PC-9 (cell line): ENCODE measurements at regions of chr12 and their contacts with region 1.

Region 1: GRCh38 chr12:26028953-26029735 is 70.7 kb downstream of the RASSF8 start:
- DNase-seq: peak in 1 of 2 experiments; percentile 42
- H3K4me3 ChIP-seq: no peak overlapping the region
- H3K27ac ChIP-seq: no peak overlapping the region
- H3K4me1 ChIP-seq: peaks cover 16% of the 10 kb centered on the region
- H3K27me3 ChIP-seq: no peaks in the 10 kb centered on the region
- CTCF ChIP-seq: peak; percentile 87

Region 2: GRCh38 chr12:25583545-25583944 is 445.6 kb before region 1 on chr12:
- CTCF ChIA-PET with region 1: no interaction called
- POLR2A ChIA-PET with region 1: no interaction called
- intact Hi-C with region 1: loop called (anchors 5 kb)
- DNase-seq: peak in 1 of 2 experiments; percentile 14
- H3K4me3 ChIP-seq: no peak overlapping the region
- H3K27ac ChIP-seq: no peak overlapping the region
- H3K4me1 ChIP-seq: no peaks in the 10 kb centered on the region
- H3K27me3 ChIP-seq: no peaks in the 10 kb centered on the region
- CTCF ChIP-seq: peak; percentile 32; the same call in 1 of the 2 replicates

Region 3: GRCh38 chr12:25935355-25936144 is 93.6 kb before region 1 on chr12:
- CTCF ChIA-PET with region 1: no interaction called
- POLR2A ChIA-PET with region 1: interaction called, 20 read pairs
- intact Hi-C with region 1: no loop called
- DNase-seq: peak in 1 of 2 experiments; percentile 40
- H3K4me3 ChIP-seq: no peak overlapping the region
- H3K27ac ChIP-seq: no peak overlapping the region
- H3K4me1 ChIP-seq: no peaks in the 10 kb centered on the region
- H3K27me3 ChIP-seq: no peaks in the 10 kb centered on the region
- CTCF ChIP-seq: no peak

Region 4: DNA sequence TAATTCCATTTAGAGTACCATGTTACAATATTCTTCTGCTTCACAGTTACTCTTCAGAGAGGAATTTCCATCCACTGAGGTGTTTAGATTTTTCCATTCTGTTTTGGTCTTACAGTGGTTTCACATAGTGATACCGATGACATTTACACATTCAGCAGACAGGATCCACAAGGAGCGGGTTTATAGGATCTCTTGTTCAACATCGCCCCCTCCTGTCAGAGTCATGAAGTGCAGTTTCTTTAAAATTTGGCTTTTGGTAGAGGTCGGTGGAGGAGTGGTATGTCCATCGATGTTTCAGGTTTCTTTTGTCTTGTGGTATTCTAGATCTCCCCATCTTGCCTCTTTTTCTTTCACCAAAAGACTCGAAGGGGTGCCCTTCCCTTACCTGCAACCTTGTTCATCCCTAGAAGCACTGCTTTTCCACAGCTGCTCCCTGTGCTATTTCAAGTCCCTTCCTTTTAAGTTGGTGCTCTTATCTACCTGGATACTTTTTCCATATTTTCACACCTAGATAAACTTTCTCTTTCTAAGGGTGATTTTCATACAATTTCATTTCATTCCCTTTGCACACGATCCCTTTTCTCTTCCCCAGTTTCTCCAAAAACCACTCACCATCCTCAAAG is 622.5 kb after region 1 on chr12:
- CTCF ChIA-PET with region 1: no interaction called
- POLR2A ChIA-PET with region 1: no interaction called
- intact Hi-C with region 1: loop called (anchors 10 kb)
- DNase-seq: peak; percentile 67 to 77
- H3K4me3 ChIP-seq: no peak overlapping the region
- H3K27ac ChIP-seq: no peak overlapping the region
- H3K4me1 ChIP-seq: peaks cover 12% of the 10 kb centered on the region; the same call in 1 of the 2 replicates
- H3K27me3 ChIP-seq: no peaks in the 10 kb centered on the region
- CTCF ChIP-seq: peak; percentile 97

Region 5: DNA sequence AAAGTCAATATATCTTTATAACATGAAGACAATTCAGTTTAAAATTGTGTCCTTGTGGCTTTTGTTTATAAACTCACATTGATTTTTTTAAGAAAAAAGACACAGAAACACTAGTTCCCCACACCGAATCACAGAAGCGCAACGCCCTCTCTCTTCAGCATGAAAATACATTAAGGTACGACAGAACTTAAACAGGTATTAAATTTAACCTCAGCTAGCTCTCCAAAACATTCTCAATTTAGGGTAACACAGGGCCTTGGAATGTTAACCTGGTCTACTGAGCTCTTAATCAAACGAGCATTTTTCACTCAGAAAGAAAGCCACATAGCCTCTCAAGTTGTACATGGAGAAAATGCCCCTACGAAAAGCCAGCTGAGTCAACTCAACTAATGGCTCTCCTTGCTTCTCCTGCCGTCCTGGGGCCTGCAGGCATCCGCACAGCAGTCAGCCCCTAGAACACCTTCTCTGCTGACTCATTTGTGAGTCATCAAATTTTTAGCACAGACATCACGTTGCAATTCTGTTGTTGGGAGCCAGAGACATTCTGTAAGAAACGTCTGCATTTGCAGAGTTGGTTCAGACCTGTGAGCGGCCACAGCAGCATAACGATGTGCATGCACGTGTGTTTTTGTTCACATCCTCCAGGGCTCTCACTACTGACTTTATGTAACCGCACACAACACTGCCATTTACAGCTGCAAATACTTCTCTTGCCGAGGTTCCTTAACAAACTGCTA is 662.3 kb after region 1 on chr12:
- CTCF ChIA-PET with region 1: no interaction called
- POLR2A ChIA-PET with region 1: no interaction called
- intact Hi-C with region 1: loop called (anchors 10 kb)
- DNase-seq: peak; percentile 69 to 88
- H3K4me3 ChIP-seq: peak overlapping the region; percentile 6; the same call in 1 of the 2 replicates
- H3K27ac ChIP-seq: peak overlapping the region; percentile 44
- H3K4me1 ChIP-seq: peaks cover 16% of the 10 kb centered on the region
- H3K27me3 ChIP-seq: no peaks in the 10 kb centered on the region
- CTCF ChIP-seq: no peak